Tibial artery (tissue), 4 donors: ENCODE measurements at regions of chr4 and their contacts with region 1.

Region 1: DNA sequence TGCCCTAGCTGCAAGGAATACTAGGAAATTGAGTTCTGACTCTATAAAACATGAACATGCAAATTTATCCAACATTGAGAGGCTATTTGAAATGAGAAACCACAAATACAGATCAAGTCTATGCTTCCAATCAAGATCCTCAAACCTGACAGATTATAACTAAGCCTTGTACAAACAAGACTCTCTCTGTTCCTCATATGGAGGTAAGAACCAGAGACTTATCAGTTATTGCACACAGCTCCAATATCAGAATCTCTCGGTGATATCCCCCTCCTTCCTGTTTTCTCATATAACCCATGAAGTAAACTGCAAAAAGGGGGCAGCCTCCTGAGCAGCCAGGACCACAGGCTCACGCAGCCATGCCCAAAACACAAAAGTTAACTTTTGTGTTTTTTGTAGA is 36.5 kb downstream of the FBXW7 start:
- DNase-seq: no peak
- H3K4me3 ChIP-seq: no peak overlapping the region
- H3K27ac ChIP-seq: no peak overlapping the region
- H3K4me1 ChIP-seq: no peaks in the 10 kb centered on the region
- H3K27me3 ChIP-seq: no peaks in the 10 kb centered on the region
- CTCF ChIP-seq: no peak

Region 2: GRCh38 chr4:152424977-152425376 is 74.4 kb before region 1 on chr4:
- intact Hi-C with region 1: no loop called
- DNase-seq: no peak
- H3K4me3 ChIP-seq: no peak overlapping the region
- H3K27ac ChIP-seq: no peak overlapping the region
- H3K4me1 ChIP-seq: peaks cover 0 to 5% (median 0%) of the 10 kb centered on the region in 4 donors
- H3K27me3 ChIP-seq: no peaks in the 10 kb centered on the region
- CTCF ChIP-seq: no peak

Region 3: GRCh38 chr4:152640058-152640833 is 140.9 kb after region 1 on chr4:
- intact Hi-C with region 1: loop called (anchors 5 kb)
- DNase-seq: no peak
- H3K4me3 ChIP-seq: no peak overlapping the region
- H3K27ac ChIP-seq: no peak overlapping the region
- H3K4me1 ChIP-seq: no peaks in the 10 kb centered on the region
- H3K27me3 ChIP-seq: no peaks in the 10 kb centered on the region
- CTCF ChIP-seq: peak; percentile 44 to 47

Region 4: DNA sequence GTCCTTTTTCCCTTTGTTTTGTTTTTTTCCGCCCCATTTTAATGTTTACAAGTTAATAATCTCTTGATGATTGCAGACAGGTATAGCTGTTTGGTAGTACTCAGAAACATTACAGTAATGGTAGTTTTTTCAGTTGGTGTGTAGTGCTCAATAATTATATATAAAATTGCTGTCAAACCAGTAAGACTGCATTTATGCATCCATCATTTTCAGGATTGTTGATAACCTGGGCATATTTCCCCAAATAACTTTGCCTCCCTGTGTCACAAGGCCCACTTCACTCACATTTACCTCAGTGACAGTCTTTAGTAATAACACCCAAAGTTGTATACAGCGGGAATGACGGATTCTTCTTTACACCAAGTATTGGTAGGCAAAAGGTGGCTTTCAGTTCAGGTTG is 296.5 kb after region 1 on chr4:
- intact Hi-C with region 1: no loop called
- DNase-seq: no peak
- H3K4me3 ChIP-seq: no peak overlapping the region
- H3K27ac ChIP-seq: no peak overlapping the region
- H3K4me1 ChIP-seq: peaks cover 0 to 11% (median 0%) of the 10 kb centered on the region in 4 donors
- H3K27me3 ChIP-seq: no peaks in the 10 kb centered on the region
- CTCF ChIP-seq: no peak